ENCODE measurements at regions of chr5 and their contacts with region 1.

Region 1: DNA sequence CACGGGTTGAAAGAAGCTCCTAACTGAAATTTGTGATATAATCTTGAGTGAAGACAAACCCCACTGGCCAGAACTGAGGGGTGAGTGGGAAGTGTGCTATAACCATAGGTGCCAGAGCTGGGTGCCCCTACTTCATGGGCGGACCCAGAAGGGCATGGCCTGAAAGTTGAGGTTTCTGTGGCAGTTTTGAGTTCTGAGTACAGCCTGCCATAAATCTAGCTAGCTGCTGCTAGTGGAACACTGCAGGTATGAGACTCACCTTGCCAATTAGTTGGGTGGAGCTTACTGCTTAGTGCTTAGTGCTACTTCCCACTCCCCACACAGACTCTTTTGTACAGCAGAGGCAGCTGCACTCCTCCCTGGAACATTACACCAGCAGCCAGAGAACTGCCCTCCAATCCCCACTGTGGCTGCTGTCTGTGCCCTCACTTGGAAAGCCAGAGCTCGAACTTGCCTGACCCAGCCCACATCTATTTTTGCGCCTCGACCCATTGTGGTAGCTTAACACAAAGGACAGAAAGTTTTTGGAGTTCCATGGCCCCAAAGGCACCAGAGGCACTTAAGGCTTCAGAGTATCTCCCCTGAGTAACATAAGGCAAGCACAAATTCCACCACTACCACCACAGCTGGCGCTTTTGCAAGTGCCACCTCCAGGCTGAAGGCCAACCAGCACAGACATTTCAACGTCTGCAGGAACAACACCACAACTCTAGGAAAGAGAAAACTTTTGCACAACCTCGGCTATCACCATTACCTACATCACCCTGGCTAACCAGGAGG is 27.1 kb upstream of the PTGER4 start:
- DNase-seq: peak in 4 of 14 experiments; percentile 8 to 60 (median 42)
- ATAC-seq: peak; percentile 27
- H3K4me3 ChIP-seq: no peak overlapping the region
- H3K4me3 Mint-ChIP-seq: peak overlapping the region; percentile 84
- H3K27ac ChIP-seq: peak overlapping the region; percentile 33 to 50
- H3K27ac Mint-ChIP-seq: peak overlapping the region; percentile 82
- H3K4me1 ChIP-seq: peaks cover 37% of the 10 kb centered on the region
- H3K4me1 Mint-ChIP-seq: peaks cover 83% of the 10 kb centered on the region
- H3K27me3 ChIP-seq: no peaks in the 10 kb centered on the region
- H3K27me3 Mint-ChIP-seq: no peaks in the 10 kb centered on the region
- CTCF ChIP-seq: no peak

Region 2: GRCh38 chr5:40594811-40595210 is 57.8 kb before region 1 on chr5:
- CTCF ChIA-PET with region 1: no interaction called
- POLR2A ChIA-PET with region 1: no interaction called
- intact Hi-C with region 1: no loop called
- DNase-seq: no peak
- ATAC-seq: no peak
- H3K4me3 ChIP-seq: no peak overlapping the region
- H3K4me3 Mint-ChIP-seq: no peak overlapping the region
- H3K27ac ChIP-seq: no peak overlapping the region
- H3K27ac Mint-ChIP-seq: no peak overlapping the region
- H3K4me1 ChIP-seq: no peaks in the 10 kb centered on the region
- H3K4me1 Mint-ChIP-seq: peaks cover 17% of the 10 kb centered on the region
- H3K27me3 ChIP-seq: no peaks in the 10 kb centered on the region
- H3K27me3 Mint-ChIP-seq: no peaks in the 10 kb centered on the region
- CTCF ChIP-seq: no peak

Region 3: GRCh38 chr5:40672425-40672824 is 19.8 kb after region 1 on chr5:
- CTCF ChIA-PET with region 1: interaction called, 11 read pairs
- POLR2A ChIA-PET with region 1: interaction called, 103 read pairs
- intact Hi-C with region 1: loop called in 1 of 2 experiments (anchors 2 kb)
- DNase-seq: no peak
- ATAC-seq: no peak
- H3K4me3 ChIP-seq: no peak overlapping the region
- H3K4me3 Mint-ChIP-seq: no peak overlapping the region
- H3K27ac ChIP-seq: no peak overlapping the region
- H3K27ac Mint-ChIP-seq: peak overlapping the region; percentile 84
- H3K4me1 ChIP-seq: peaks cover 47% of the 10 kb centered on the region
- H3K4me1 Mint-ChIP-seq: peaks cover 81% of the 10 kb centered on the region
- H3K27me3 ChIP-seq: no peaks in the 10 kb centered on the region
- H3K27me3 Mint-ChIP-seq: no peaks in the 10 kb centered on the region
- CTCF ChIP-seq: no peak

Measured in CD4-positive, alpha-beta T cell (primary cell).